ENCODE measurements at regions of chr9 and their contacts with region 1.

Region 1: GRCh38 chr9:125374443-125375309 is 113.0 kb downstream of the GAPVD1 start:
- DNase-seq: peak; percentile 86
- H3K4me3 ChIP-seq: peak overlapping the region; percentile 61
- H3K27ac ChIP-seq: no peak overlapping the region
- H3K4me1 ChIP-seq: no peaks in the 10 kb centered on the region
- H3K27me3 ChIP-seq: no peaks in the 10 kb centered on the region; the same call in 1 of the 2 replicates

Region 2: DNA sequence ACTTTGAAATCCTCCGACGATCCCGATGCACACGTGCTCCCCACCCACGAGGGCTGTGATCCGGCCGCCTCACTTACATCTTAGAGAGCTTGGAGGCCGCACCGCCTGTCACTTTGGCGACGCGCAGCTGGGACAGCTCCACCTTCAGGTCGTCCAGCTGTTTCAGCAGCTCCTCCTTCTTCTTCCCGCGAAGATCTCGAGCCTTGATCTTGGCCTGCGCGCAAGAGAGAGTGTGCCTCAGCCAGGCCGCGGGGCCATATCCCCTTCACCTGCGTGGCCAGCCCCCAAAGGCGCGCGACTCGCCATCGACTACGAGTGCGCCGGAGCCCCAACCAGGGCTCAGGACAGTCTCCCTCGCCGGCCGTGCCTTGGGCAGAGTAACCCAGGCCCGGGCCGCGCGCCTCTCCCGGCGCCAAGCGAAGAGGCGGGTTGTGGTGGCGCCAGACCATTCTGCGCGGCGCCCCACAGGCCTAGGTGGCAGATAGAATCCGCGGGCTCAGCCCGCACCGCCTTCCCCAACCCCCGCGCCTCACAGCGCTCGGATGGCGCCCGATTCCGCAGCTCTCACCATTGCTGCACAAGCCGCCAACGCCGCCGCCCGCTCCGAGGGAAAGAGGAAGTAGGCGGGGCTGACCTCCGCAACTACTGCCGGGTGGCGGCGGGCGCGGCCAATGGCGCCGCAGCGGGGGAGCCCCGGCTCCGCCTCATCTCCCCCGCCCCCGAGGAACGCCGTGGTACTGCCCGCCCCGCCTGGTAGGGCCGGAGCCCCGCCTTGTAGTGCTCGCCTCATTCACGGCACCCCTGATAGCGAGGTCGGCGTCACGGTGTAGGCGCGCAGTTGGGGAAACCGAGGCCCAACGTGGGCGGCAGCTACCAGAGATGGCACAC is 513.1 kb before region 1 on chr9 and contains the starts of genes ARPC5L and RPL35:
- in situ Hi-C with region 1: loop called (anchors 10 kb)
- DNase-seq: peak; percentile 98
- H3K4me3 ChIP-seq: peak within 1 kb of the TSS; percentile 81
- H3K27ac ChIP-seq: peak within 1 kb of the TSS; percentile 77
- H3K4me1 ChIP-seq: peaks cover 12% of the 10 kb centered on the region
- H3K27me3 ChIP-seq: no peaks in the 10 kb centered on the region
- total RNA-seq, gene ARPC5L: 21.9 and 31.5 TPM in 2 replicates
- total RNA-seq, gene RPL35: 1,199 and 1,347 TPM in 2 replicates

Region 3: DNA sequence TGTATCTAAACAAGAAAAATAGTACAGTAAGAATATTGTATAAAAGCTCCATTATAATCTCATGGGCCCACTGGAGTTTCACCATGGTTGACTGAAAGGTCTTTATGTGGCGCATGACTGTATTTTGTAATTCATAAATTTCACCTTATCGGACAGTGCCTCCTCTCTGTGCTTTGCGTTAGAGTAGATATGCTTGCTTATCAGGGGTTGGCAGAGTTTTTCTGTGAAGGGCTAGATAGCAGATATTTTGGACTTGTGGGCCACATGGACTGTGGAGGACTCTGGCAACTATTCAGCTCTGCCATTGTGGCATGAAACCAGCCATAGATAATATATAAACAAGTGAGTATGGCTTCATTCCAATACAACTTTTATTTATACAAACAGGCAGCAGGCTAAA is 89.8 kb before region 1 on chr9:
- in situ Hi-C with region 1: no loop called
- DNase-seq: no peak
- H3K4me3 ChIP-seq: no peak overlapping the region
- H3K27ac ChIP-seq: no peak overlapping the region
- H3K4me1 ChIP-seq: no peaks in the 10 kb centered on the region
- H3K27me3 ChIP-seq: no peaks in the 10 kb centered on the region

Measured in GM23248 (cell line).